ENCODE measurements at regions of chr14 and their contacts with region 1.

Region 1: DNA sequence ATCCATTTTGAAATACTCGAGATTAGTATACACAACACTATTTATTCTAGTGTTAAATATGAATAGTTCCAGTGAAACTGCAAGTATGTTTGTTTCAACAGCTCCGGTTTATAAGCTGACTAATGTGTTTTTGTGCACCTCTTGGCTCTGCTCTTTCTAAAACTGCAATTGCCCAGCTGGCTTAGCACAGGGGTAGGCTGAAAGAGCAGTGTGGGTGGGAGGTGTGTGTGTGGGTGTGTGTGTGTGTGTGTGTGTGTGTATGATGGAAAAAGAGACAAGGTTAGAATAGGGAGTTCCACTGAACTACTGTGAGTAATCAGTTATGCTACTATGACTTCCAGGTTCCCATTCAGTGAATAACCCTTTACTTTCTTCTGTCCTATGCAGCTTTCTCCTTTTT is 37.8 kb upstream of the DDHD1 start:
- DNase-seq: peak; percentile 28
- H3K4me3 Mint-ChIP-seq: peak overlapping the region; percentile 80
- H3K27ac Mint-ChIP-seq: peak overlapping the region; percentile 99
- H3K4me1 Mint-ChIP-seq: peaks cover 54% of the 10 kb centered on the region
- H3K27me3 Mint-ChIP-seq: peaks cover 4% of the 10 kb centered on the region

Region 2: GRCh38 chr14:52824507-52824906 is 366.4 kb before region 1 on chr14:
- intact Hi-C with region 1: loop called (anchors 5 kb)
- DNase-seq: no peak
- H3K4me3 Mint-ChIP-seq: no peak overlapping the region
- H3K27ac Mint-ChIP-seq: no peak overlapping the region
- H3K4me1 Mint-ChIP-seq: no peaks in the 10 kb centered on the region
- H3K27me3 Mint-ChIP-seq: peaks cover 14% of the 10 kb centered on the region

Region 3: GRCh38 chr14:52918486-52918885 is 272.5 kb before region 1 on chr14:
- intact Hi-C with region 1: loop called (anchors 5 kb)
- DNase-seq: peak; percentile 33
- H3K4me3 Mint-ChIP-seq: no peak overlapping the region
- H3K27ac Mint-ChIP-seq: peak overlapping the region; percentile 50
- H3K4me1 Mint-ChIP-seq: peaks cover 36% of the 10 kb centered on the region
- H3K27me3 Mint-ChIP-seq: no peaks in the 10 kb centered on the region

Region 4: DNA sequence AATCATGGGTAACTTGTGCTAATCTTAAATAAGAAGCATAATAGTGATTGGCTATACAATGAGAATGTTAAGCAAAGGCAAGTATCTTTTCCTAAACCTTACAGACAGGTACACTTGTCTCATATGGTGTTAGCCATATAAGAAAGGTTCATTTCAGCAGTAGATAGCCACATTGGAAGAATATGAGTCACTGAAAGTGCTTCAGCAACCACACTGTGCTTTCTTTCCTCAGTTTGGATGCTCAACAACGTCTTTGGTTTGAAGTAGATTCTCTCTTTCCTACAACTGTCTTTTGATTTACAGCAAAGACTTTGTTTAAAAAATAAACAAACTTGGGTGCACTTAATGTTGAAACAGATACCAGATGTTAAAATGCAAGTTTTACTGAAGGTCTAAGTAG is 46.7 kb before region 1 on chr14:
- intact Hi-C with region 1: loop called (anchors 2 kb)
- DNase-seq: no peak
- H3K4me3 Mint-ChIP-seq: peak overlapping the region; percentile 29
- H3K27ac Mint-ChIP-seq: peak overlapping the region; percentile 76
- H3K4me1 Mint-ChIP-seq: peaks cover 79% of the 10 kb centered on the region
- H3K27me3 Mint-ChIP-seq: no peaks in the 10 kb centered on the region

Region 5: GRCh38 chr14:53180268-53181221 is 10.4 kb before region 1 on chr14:
- intact Hi-C with region 1: loop called (anchors 1 kb)
- DNase-seq: peak; percentile 65
- H3K4me3 Mint-ChIP-seq: peak overlapping the region; percentile 45
- H3K27ac Mint-ChIP-seq: peak overlapping the region; percentile 67
- H3K4me1 Mint-ChIP-seq: peaks cover 58% of the 10 kb centered on the region
- H3K27me3 Mint-ChIP-seq: peaks cover 4% of the 10 kb centered on the region

Region 6: GRCh38 chr14:53217295-53217994 is 26.5 kb after region 1 on chr14:
- intact Hi-C with region 1: loop called (anchors 1 kb)
- DNase-seq: peak; percentile 70
- H3K4me3 Mint-ChIP-seq: peak overlapping the region; percentile 85
- H3K27ac Mint-ChIP-seq: peak overlapping the region; percentile 59
- H3K4me1 Mint-ChIP-seq: peaks cover 6% of the 10 kb centered on the region
- H3K27me3 Mint-ChIP-seq: no peaks in the 10 kb centered on the region